ENCODE measurements at regions of chr7 and their contacts with region 1.

Region 1: GRCh38 chr7:102396027-102397019 is at the start of gene PRKRIP1:
- DNase-seq: peak; percentile 85 to 91 (median 86)
- H3K4me3 ChIP-seq: peak within 1 kb of the TSS; percentile 94 to 100 (median 99)
- H3K27ac ChIP-seq: peak within 1 kb of the TSS; percentile 83 to 91
- H3K4me1 ChIP-seq: peaks cover 3 to 19% (median 15%) of the 10 kb centered on the region in 4 experiments
- H3K27me3 ChIP-seq: no peaks in the 10 kb centered on the region

Region 2: DNA sequence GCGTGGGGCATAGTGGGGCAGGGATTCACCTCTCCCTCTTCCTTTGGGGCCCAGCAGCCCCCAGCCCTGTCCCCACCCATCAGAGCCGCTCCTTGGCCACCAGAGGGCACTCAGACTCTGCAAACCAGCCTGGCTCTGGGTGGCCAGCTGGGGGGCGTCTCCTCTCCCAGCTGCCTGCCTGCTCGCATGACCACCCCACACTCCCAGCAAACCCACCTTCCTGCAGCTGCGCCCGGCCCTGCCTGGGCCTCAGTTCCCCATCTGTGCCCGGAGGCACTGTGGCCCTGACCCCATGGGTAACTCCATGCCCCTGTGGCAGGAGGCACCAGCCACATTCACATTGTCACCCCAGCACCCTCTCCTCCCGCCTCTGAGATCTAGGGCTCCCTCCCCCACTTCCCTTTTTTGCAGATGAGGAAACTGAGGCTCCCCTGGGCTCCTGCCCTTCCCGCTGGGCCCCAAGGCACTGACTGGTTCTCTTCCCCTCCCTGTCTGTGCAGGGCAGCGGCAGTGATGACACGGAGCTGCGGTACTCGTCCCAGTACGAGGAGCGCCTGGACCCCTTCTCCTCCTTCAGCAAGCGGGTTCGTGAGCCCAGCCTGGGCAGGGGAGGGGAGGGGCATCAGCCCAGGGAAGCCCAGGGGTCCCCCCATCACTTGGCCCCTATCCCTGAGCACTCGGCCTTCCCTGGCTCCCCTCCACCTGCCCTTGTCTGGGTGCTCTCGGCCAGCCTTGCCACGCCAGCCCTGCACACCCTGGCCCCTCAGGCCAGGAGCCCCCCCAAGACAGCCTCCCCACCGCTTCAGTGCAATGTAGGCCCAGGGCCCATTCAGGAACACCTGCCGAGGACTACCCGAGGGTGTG is 116.6 kb before region 1 on chr7:
- CTCF ChIA-PET with region 1: interaction called, 246 read pairs
- POLR2A ChIA-PET with region 1: interaction called, 3 read pairs
- DNase-seq: peak; percentile 56 to 82 (median 80)
- H3K4me3 ChIP-seq: no peak overlapping the region
- H3K27ac ChIP-seq: no peak overlapping the region
- H3K4me1 ChIP-seq: peaks cover 0 to 20% (median 9%) of the 10 kb centered on the region in 4 experiments
- H3K27me3 ChIP-seq: no peaks in the 10 kb centered on the region

Region 3: DNA sequence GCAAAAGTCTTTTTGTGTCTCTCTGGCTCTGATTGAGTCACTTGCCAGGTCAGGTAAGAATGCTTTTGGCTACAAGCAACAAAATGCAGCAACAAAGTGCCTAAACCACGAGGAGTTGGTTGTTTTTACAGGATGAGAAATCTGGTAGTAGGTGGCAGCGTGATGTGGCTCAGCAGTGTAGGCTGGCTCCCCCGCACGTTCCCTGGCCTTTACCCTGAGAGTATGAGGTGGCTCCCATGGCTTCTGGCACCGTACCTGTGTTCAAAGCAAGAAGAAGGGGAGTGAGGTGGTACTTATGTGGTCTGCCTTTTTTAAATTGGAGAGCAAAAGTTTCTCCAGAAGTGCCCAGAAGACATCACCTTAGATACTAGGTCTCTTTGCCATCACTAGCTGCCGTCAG is 11.6 kb after region 1 on chr7:
- CTCF ChIA-PET with region 1: interaction called, 1,488 read pairs
- POLR2A ChIA-PET with region 1: no interaction called
- DNase-seq: no peak
- H3K4me3 ChIP-seq: no peak overlapping the region
- H3K27ac ChIP-seq: no peak overlapping the region
- H3K4me1 ChIP-seq: peaks cover 0 to 8% (median 1%) of the 10 kb centered on the region in 4 experiments
- H3K27me3 ChIP-seq: no peaks in the 10 kb centered on the region

Region 4: GRCh38 chr7:102464577-102465280 is 68.4 kb after region 1 on chr7 and contains the starts of genes ALKBH4 and LRWD1:
- CTCF ChIA-PET with region 1: interaction called, 1,488 read pairs
- POLR2A ChIA-PET with region 1: no interaction called
- DNase-seq: peak; percentile 91 to 94 (median 93)
- H3K4me3 ChIP-seq: peak within 1 kb of the TSS; percentile 63 to 100 (median 98)
- H3K27ac ChIP-seq: peak within 1 kb of the TSS; percentile 66 to 85
- H3K4me1 ChIP-seq: peaks cover 5 to 20% (median 18%) of the 10 kb centered on the region in 4 experiments
- H3K27me3 ChIP-seq: no peaks in the 10 kb centered on the region

Region 5: DNA sequence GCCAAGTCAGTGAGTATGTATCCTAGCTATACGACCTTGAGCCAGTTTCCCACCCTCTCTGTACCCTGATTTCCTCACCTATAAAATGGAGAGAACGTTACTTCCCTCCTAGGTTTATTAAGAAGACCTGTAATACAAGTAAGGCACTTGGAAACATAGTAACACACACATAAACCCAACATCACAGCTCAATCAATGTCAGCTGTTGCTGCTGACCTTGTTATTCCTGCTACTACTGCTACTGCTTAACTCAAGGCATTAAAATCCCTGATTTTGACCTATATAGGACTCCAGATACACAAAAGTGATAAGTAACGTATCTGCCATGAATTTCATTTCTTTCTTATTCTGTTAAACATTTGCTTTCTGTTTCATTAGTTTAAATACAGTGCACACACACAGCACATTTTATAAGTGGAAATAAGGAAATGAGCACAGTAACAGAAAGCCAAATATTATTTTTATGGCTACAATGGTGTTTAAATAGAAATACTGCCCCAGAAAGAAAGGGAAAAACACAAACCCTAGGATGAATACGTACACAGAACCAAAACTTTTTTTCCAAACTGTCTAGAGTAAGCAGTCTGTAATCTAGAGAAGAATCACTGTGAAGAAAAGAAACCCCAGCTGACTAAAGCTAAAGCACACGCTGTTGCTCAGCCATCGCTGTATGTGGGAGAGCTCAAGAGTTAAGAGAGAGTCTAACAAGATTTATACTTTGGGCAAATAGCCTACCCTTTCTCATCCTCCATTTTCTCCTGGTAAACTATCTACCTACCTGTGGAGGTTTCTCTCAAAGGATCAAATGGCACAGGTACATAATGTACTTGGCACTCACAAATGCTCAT is 733.6 kb after region 1 on chr7:
- CTCF ChIA-PET with region 1: no interaction called
- POLR2A ChIA-PET with region 1: no interaction called
- DNase-seq: no peak
- H3K4me3 ChIP-seq: peak overlapping the region in 2 of 7 experiments; percentile 19 to 22
- H3K27ac ChIP-seq: peak overlapping the region; percentile 7 to 50
- H3K4me1 ChIP-seq: peaks cover 0 to 4% (median 0%) of the 10 kb centered on the region in 4 experiments
- H3K27me3 ChIP-seq: no peaks in the 10 kb centered on the region